B cell (primary cell): ENCODE measurements at regions of chr22 and their contacts with region 1.

Region 1: DNA sequence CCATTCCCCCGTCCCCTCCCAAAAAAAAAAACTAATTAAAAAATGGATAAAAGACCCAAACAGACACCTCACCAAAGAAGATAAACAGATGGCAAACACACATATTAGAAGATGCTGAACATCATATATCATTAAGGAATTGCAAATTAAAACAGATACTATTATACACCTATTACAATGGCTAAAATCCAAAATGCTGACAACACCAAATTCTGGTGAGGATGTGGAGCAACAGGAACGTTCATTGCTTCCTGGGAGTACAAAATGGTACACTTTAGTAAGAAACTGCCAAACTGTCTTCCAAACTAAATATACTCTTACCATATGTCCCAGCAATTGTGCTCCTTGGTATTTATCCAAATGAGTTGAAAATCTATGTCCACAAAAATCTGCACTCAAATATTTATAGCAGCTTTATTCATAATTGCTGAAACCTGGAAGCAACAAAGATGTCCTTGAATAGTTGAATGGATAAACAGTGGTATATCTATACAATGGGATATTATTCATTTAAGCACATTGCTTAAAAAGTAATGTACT is 19.9 kb downstream of the NAGA start:
- DNase-seq: no peak
- ATAC-seq: no peak
- H3K4me3 ChIP-seq: no peak overlapping the region
- H3K4me3 Mint-ChIP-seq: no peak overlapping the region
- H3K27ac ChIP-seq: no peak overlapping the region
- H3K27ac Mint-ChIP-seq: no peak overlapping the region
- H3K4me1 ChIP-seq: no peaks in the 10 kb centered on the region
- H3K4me1 Mint-ChIP-seq: no peaks in the 10 kb centered on the region
- H3K27me3 ChIP-seq: no peaks in the 10 kb centered on the region
- H3K27me3 Mint-ChIP-seq: no peaks in the 10 kb centered on the region
- CTCF ChIP-seq: no peak

Region 2: GRCh38 chr22:42039271-42039670 is 11.4 kb before region 1 on chr22:
- CTCF ChIA-PET with region 1: no interaction called
- POLR2A ChIA-PET with region 1: interaction called, 11 read pairs
- intact Hi-C with region 1: no loop called
- DNase-seq: no peak
- ATAC-seq: no peak
- H3K4me3 ChIP-seq: no peak overlapping the region
- H3K4me3 Mint-ChIP-seq: no peak overlapping the region
- H3K27ac ChIP-seq: no peak overlapping the region
- H3K27ac Mint-ChIP-seq: no peak overlapping the region
- H3K4me1 ChIP-seq: peaks cover 7 to 8% of the 10 kb centered on the region in 2 donors
- H3K4me1 Mint-ChIP-seq: peaks cover 22% of the 10 kb centered on the region
- H3K27me3 ChIP-seq: no peaks in the 10 kb centered on the region
- H3K27me3 Mint-ChIP-seq: no peaks in the 10 kb centered on the region
- CTCF ChIP-seq: no peak

Region 3: DNA sequence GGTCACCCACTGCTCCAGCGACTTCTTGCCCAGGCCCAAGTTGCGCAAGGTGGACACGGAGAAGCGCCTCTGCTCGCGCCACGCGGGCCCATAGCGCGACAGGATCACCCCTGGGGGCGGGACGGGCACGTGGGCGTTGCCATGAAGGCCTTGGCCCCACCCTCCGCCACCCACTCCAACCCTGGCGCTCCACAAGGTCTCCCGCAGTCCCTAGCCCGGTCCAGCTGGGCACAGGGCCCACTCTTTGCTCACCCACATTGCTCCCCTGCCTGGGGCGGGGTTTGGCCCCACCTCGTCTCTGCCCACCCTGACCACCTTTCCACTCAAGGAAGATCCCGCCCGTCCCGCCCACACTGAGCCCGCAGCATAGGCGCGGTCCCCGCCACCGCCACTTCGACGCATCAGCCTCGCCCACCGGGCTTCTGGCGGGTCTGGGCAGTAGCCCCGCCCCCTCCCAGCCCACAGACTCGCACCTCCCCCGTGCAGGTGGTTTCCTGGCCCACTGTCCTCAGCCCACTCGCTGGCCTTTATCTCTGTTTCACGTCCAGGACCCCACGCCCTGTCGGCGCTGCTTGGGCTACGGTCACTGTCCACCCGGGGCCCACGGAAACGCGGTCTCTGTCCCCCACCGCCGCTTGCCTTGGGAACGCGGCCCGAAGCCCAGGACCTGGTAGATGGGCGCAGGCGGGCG is 92.2 kb after region 1 on chr22:
- CTCF ChIA-PET with region 1: no interaction called
- POLR2A ChIA-PET with region 1: no interaction called
- intact Hi-C with region 1: no loop called
- DNase-seq: no peak
- ATAC-seq: no peak
- H3K4me3 ChIP-seq: no peak overlapping the region
- H3K4me3 Mint-ChIP-seq: no peak overlapping the region
- H3K27ac ChIP-seq: no peak overlapping the region
- H3K27ac Mint-ChIP-seq: no peak overlapping the region
- H3K4me1 ChIP-seq: no peaks in the 10 kb centered on the region
- H3K4me1 Mint-ChIP-seq: no peaks in the 10 kb centered on the region
- H3K27me3 ChIP-seq: no peaks in the 10 kb centered on the region
- H3K27me3 Mint-ChIP-seq: no peaks in the 10 kb centered on the region
- CTCF ChIP-seq: no peak